IMR-90 (cell line): ENCODE measurements at regions of chr5 and their contacts with region 1.

Region 1: DNA sequence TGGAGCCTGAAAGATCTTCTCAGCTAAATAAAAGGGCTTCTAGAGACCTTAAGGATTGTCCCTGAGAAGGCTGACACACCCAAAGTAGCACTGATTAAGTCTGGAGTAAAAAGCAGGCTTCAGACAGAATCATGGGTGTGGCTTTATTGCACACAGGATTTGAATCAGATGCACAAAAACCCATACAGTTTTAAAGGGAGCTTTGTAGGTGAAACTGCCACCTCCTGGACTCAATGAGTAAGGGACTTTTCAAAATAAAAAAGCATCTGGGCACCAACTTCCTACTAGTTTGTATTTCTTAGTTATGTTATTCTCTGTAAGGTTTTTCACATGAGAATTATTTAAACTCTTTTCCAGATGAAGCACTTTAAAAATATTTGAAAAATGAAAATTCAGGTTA is 129.4 kb downstream of the EDIL3 start:
- DNase-seq: peak; percentile 48
- ATAC-seq: peak; percentile 68
- H3K4me3 ChIP-seq: no peak overlapping the region
- H3K27ac ChIP-seq: no peak overlapping the region
- H3K4me1 ChIP-seq: peaks cover under 1% of the 10 kb centered on the region; the same call in 1 of the 2 replicates
- H3K27me3 ChIP-seq: no peaks in the 10 kb centered on the region
- CTCF ChIP-seq: peak; percentile 47
- POLR2A ChIP-seq: no peak
- RAD21 ChIP-seq: peak; percentile 48

Region 2: GRCh38 chr5:83718195-83718825 is 537.0 kb before region 1 on chr5:
- CTCF ChIA-PET with region 1: no interaction called
- POLR2A ChIA-PET with region 1: no interaction called
- dilution Hi-C with region 1: no loop called
- in situ Hi-C with region 1: loop called (anchors 10 kb)
- intact Hi-C with region 1: loop called (anchors 1 kb)
- DNase-seq: peak; percentile 73
- ATAC-seq: peak; percentile 56
- H3K4me3 ChIP-seq: no peak overlapping the region
- H3K27ac ChIP-seq: no peak overlapping the region
- H3K4me1 ChIP-seq: peaks cover 3% of the 10 kb centered on the region
- H3K27me3 ChIP-seq: peaks cover 8% of the 10 kb centered on the region
- CTCF ChIP-seq: peak; percentile 95
- POLR2A ChIP-seq: 0 out of 2 replicates have a peak, but pooled peaks have one; percentile 33
- RAD21 ChIP-seq: peak; percentile 99

Region 3: DNA sequence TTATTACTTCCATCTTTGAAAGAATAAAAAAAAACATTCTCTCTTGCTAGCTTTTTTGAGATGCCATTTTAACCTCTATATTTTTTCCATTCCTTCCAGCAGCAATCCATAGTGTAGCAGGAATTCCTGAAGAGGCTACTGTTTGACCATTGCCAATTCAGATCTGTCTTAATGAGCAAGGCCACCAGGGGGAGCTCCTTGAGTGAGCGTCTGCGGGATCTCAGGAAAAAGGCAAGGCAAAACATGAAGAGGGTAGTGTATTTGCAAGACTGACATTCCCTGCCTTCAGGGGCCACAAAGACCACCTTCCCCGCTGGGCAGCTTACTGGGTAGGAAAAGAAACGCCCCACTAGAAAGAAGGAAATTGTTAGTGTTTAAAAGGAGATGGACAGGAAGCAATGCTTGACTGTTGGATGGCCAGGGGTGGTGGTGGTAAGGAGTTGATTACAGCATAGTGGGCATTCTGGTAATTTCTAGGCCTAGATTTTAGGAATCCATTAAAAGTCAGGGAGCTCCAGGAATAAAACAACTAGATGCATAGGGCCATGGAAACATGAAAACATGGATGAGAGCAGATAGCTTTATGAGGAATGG is 328.1 kb before region 1 on chr5:
- CTCF ChIA-PET with region 1: interaction called, 3 read pairs
- POLR2A ChIA-PET with region 1: no interaction called
- dilution Hi-C with region 1: no loop called
- in situ Hi-C with region 1: loop called (anchors 10 kb)
- intact Hi-C with region 1: loop called (anchors 1 kb)
- DNase-seq: peak; percentile 64
- ATAC-seq: peak; percentile 53
- H3K4me3 ChIP-seq: no peak overlapping the region
- H3K27ac ChIP-seq: no peak overlapping the region
- H3K4me1 ChIP-seq: peaks cover 21% of the 10 kb centered on the region
- H3K27me3 ChIP-seq: no peaks in the 10 kb centered on the region
- CTCF ChIP-seq: peak; percentile 71
- POLR2A ChIP-seq: no peak
- RAD21 ChIP-seq: peak; percentile 73

Region 4: DNA sequence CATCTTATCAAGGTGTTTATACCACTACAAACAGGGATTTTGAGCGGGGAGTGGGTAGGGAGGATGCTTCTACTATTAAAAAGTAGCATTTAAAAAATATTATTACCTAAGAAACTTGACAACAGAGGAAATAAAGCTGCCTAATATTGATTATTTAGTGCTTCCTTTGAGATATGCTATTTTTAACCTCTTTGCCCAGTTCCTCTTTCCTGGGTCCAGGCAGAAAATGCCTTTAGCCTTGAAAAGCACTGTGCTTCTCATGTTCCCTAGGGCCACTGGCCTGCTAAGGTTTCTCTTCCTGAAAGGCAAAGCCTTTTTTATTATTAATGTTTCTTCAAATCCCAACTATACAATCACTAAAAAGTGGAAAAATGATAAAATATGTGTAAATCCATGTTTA is 317.5 kb before region 1 on chr5:
- CTCF ChIA-PET with region 1: no interaction called
- POLR2A ChIA-PET with region 1: no interaction called
- dilution Hi-C with region 1: no loop called
- in situ Hi-C with region 1: loop called (anchors 10 kb)
- intact Hi-C with region 1: no loop called
- DNase-seq: no peak
- ATAC-seq: no peak
- H3K4me3 ChIP-seq: no peak overlapping the region
- H3K27ac ChIP-seq: no peak overlapping the region
- H3K4me1 ChIP-seq: no peaks in the 10 kb centered on the region
- H3K27me3 ChIP-seq: no peaks in the 10 kb centered on the region
- CTCF ChIP-seq: no peak
- POLR2A ChIP-seq: no peak
- RAD21 ChIP-seq: no peak

Region 5: GRCh38 chr5:85049020-85049419 is 793.7 kb after region 1 on chr5:
- CTCF ChIA-PET with region 1: no interaction called
- POLR2A ChIA-PET with region 1: no interaction called
- dilution Hi-C with region 1: no loop called
- in situ Hi-C with region 1: no loop called
- intact Hi-C with region 1: loop called (anchors 10 kb)
- DNase-seq: peak; percentile 70
- ATAC-seq: peak; percentile 93
- H3K4me3 ChIP-seq: no peak overlapping the region
- H3K27ac ChIP-seq: no peak overlapping the region
- H3K4me1 ChIP-seq: no peaks in the 10 kb centered on the region
- H3K27me3 ChIP-seq: no peaks in the 10 kb centered on the region
- CTCF ChIP-seq: peak; percentile 61
- POLR2A ChIP-seq: no peak
- RAD21 ChIP-seq: peak; percentile 70